Calu3 (cell line): ENCODE measurements at regions of chr11 and their contacts with region 1.

Region 1: GRCh38 chr11:16738193-16738946 is at the start of gene C11orf58:
- DNase-seq: peak; percentile 95
- H3K4me3 Mint-ChIP-seq: no peak within 1 kb of the TSS
- H3K27ac Mint-ChIP-seq: no peak within 1 kb of the TSS
- H3K4me1 Mint-ChIP-seq: peaks cover 17% of the 10 kb centered on the region
- H3K27me3 Mint-ChIP-seq: no peaks in the 10 kb centered on the region
- CTCF ChIP-seq: no peak
- total RNA-seq, gene C11orf58: 153 and 157 TPM in 2 replicates

Region 2: GRCh38 chr11:16418428-16419097 is 319.8 kb before region 1 on chr11:
- CTCF ChIA-PET with region 1: no interaction called
- intact Hi-C with region 1: no loop called
- DNase-seq: no peak
- H3K4me3 Mint-ChIP-seq: no peak overlapping the region
- H3K27ac Mint-ChIP-seq: no peak overlapping the region
- H3K4me1 Mint-ChIP-seq: no peaks in the 10 kb centered on the region
- H3K27me3 Mint-ChIP-seq: no peaks in the 10 kb centered on the region
- CTCF ChIP-seq: no peak

Region 3: DNA sequence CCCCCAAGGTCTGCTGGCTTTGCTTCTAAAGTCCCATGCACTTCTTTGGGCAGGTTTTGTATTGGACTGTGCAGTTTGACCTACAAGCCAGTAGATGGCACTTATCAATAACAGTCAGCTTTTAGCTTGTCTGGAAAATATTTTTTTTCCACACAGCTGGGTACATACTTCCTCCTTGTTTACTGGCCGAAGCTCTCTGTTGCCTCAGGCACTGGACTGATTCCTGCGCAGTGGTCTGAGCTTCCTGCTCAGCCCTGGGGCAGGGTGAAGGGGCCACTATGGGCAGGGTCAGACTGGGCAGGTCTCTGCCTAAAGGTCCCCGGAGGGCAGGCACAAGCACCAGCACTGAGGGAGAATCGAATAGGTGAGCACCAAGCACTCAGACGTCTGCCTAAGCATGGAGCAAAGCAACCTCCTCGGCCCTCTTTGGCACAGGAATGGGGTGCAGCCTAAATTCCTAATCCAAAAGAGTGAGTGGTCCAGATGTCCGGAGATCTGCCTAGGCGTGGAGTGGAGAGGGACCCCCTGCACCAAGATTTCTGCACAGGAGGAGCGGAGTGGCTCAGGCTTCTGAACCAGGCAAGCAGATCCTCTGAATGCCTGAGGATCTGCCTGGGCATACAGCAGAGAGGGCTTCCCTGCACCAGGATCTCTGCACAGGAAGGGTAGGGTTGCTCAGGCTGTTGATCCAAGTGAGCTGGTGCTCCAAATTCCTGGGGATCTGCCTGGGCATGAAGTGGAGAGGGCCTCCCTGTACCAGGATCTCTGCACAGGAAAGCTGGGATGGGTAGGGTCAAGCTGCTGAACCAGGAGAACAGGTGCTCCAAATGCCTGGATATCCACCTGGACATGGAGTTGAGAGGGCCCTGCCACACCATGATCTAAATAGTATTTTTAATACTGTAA is 105.8 kb before region 1 on chr11:
- CTCF ChIA-PET with region 1: interaction called, 13 read pairs
- intact Hi-C with region 1: loop called (anchors 2 kb)
- DNase-seq: peak; percentile 28
- H3K4me3 Mint-ChIP-seq: no peak overlapping the region
- H3K27ac Mint-ChIP-seq: peak overlapping the region; percentile 14
- H3K4me1 Mint-ChIP-seq: peaks cover 10% of the 10 kb centered on the region
- H3K27me3 Mint-ChIP-seq: peaks cover 24% of the 10 kb centered on the region
- CTCF ChIP-seq: peak; percentile 27

Region 4: DNA sequence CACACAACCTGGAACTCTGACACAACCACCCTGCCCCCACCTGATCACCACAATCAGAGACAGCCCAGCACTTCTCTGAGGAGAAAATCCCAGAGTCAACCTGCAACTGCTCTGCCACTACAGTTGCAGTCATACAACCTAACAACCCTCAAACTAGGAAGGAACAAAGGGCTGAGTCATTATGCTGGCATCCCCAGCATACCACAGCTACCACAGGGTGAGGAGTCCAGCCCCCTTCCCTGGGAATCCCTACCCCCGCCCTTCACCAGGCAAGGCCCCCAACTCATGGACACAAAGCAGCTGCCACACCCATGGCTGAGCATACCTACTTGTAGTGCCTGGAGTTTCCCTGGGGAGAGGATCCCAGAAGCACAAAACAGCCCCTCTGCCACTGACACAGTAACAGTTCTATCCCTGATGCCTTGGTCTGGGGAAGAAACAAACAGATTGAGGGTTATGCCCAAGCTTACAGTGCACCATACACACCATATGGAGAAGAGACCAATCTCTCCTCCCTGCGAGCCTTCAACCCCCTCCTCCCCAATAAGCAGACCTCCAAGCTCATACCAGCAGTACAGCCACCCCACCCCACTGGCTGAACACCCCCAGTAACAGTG is 68.5 kb before region 1 on chr11:
- CTCF ChIA-PET with region 1: interaction called, 3 read pairs
- intact Hi-C with region 1: loop called (anchors 1 kb)
- DNase-seq: peak; percentile 79
- H3K4me3 Mint-ChIP-seq: no peak overlapping the region
- H3K27ac Mint-ChIP-seq: peak overlapping the region; percentile 86
- H3K4me1 Mint-ChIP-seq: peaks cover 17% of the 10 kb centered on the region
- H3K27me3 Mint-ChIP-seq: no peaks in the 10 kb centered on the region
- CTCF ChIP-seq: no peak

Region 5: GRCh38 chr11:16749666-16750065 is 11.3 kb after region 1 on chr11:
- CTCF ChIA-PET with region 1: no interaction called
- intact Hi-C with region 1: no loop called
- DNase-seq: no peak
- H3K4me3 Mint-ChIP-seq: no peak overlapping the region
- H3K27ac Mint-ChIP-seq: no peak overlapping the region
- H3K4me1 Mint-ChIP-seq: peaks cover 13% of the 10 kb centered on the region
- H3K27me3 Mint-ChIP-seq: no peaks in the 10 kb centered on the region
- CTCF ChIP-seq: no peak